ENCODE measurements at regions of chr7 and their contacts with region 1.

Region 1: GRCh38 chr7:112449902-112450806 is at the start of gene IFRD1:
- DNase-seq: peak; percentile 99 to 100 (median 99)
- ATAC-seq: peak; percentile 89
- H3K4me3 ChIP-seq: peak within 1 kb of the TSS; percentile 88
- H3K27ac ChIP-seq: peak within 1 kb of the TSS; percentile 87
- H3K4me1 ChIP-seq: peaks cover 8 to 12% of the 10 kb centered on the region in 2 experiments; a peak in 4 of 5 replicates
- H3K27me3 ChIP-seq: no peaks in the 10 kb centered on the region
- CTCF ChIP-seq: 0 out of 6 replicates have a peak, but pooled peaks of 1 of the 3 experiments have one; percentile 6
- EP300 ChIP-seq: no peak; the same call in none of the 2 replicates
- POLR2A ChIP-seq: peak; percentile 100
- RAD21 ChIP-seq: peak in 1 of 2 experiments; percentile 13; a peak in 2 of 4 replicates
- polyA plus RNA-seq, gene IFRD1: 27.6 to 37.0 TPM

Region 2: GRCh38 chr7:112238852-112239610 is 211.1 kb before region 1 on chr7:
- CTCF ChIA-PET with region 1: no interaction called
- POLR2A ChIA-PET with region 1: no interaction called
- in situ Hi-C with region 1: no loop called
- intact Hi-C with region 1: no loop called
- DNase-seq: no peak
- ATAC-seq: no peak
- H3K4me3 ChIP-seq: no peak overlapping the region
- H3K27ac ChIP-seq: no peak overlapping the region
- H3K4me1 ChIP-seq: no peaks in the 10 kb centered on the region
- H3K27me3 ChIP-seq: no peaks in the 10 kb centered on the region
- CTCF ChIP-seq: no peak
- EP300 ChIP-seq: no peak
- POLR2A ChIP-seq: no peak
- RAD21 ChIP-seq: no peak

Region 3: GRCh38 chr7:112422842-112423496 is 27.2 kb before region 1 on chr7:
- CTCF ChIA-PET with region 1: no interaction called
- POLR2A ChIA-PET with region 1: interaction called, 21 read pairs
- in situ Hi-C with region 1: no loop called
- intact Hi-C with region 1: no loop called
- DNase-seq: peak; percentile 85 to 91 (median 89)
- ATAC-seq: peak; percentile 96
- H3K4me3 ChIP-seq: no peak overlapping the region
- H3K27ac ChIP-seq: peak overlapping the region; percentile 42
- H3K4me1 ChIP-seq: peaks cover 0 to 20% of the 10 kb centered on the region in 2 experiments; a peak in 4 of 5 replicates
- H3K27me3 ChIP-seq: no peaks in the 10 kb centered on the region
- CTCF ChIP-seq: no peak; a peak in 1 of 6 replicates
- EP300 ChIP-seq: peak; percentile 34
- POLR2A ChIP-seq: no peak
- RAD21 ChIP-seq: peak in 1 of 2 experiments; percentile 14; a peak in 1 of 4 replicates

Region 4: GRCh38 chr7:112437043-112437442 is 13.1 kb before region 1 on chr7:
- CTCF ChIA-PET with region 1: no interaction called
- POLR2A ChIA-PET with region 1: interaction called, 33 read pairs
- in situ Hi-C with region 1: no loop called
- intact Hi-C with region 1: no loop called
- DNase-seq: no peak
- ATAC-seq: no peak
- H3K4me3 ChIP-seq: no peak overlapping the region
- H3K27ac ChIP-seq: no peak overlapping the region
- H3K4me1 ChIP-seq: peaks cover 0 to 3% of the 10 kb centered on the region in 2 experiments; a peak in 1 of 5 replicates
- H3K27me3 ChIP-seq: peaks cover 26 to 32% of the 10 kb centered on the region in 2 experiments; a peak in 4 of 5 replicates
- CTCF ChIP-seq: no peak
- EP300 ChIP-seq: no peak
- POLR2A ChIP-seq: no peak
- RAD21 ChIP-seq: no peak

Region 5: DNA sequence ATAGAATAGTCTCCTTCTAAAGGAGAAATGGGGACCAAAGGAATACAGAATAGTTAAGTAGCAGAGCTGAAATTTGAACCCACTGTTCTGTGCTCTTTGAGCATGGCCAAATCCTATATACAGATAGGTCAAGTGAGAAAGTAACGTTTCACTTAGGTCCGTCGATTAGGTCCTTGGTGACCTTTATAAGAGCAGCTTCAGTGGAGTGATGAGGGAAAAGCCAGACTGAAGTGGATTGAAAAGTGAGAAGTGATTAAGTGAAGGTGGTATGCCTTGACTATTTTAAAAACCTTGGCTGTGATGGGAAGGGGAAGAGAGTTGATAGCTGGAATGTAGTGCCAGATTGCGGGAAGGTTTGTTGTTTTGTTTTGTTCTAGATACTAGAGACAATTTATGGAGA is 20.0 kb after region 1 on chr7:
- CTCF ChIA-PET with region 1: no interaction called
- POLR2A ChIA-PET with region 1: interaction called, 113 read pairs
- in situ Hi-C with region 1: no loop called
- intact Hi-C with region 1: no loop called
- DNase-seq: no peak
- ATAC-seq: no peak
- H3K4me3 ChIP-seq: no peak overlapping the region
- H3K27ac ChIP-seq: no peak overlapping the region
- H3K4me1 ChIP-seq: no peaks in the 10 kb centered on the region
- H3K27me3 ChIP-seq: no peaks in the 10 kb centered on the region
- CTCF ChIP-seq: no peak
- EP300 ChIP-seq: no peak
- POLR2A ChIP-seq: no peak
- RAD21 ChIP-seq: no peak

Region 6: DNA sequence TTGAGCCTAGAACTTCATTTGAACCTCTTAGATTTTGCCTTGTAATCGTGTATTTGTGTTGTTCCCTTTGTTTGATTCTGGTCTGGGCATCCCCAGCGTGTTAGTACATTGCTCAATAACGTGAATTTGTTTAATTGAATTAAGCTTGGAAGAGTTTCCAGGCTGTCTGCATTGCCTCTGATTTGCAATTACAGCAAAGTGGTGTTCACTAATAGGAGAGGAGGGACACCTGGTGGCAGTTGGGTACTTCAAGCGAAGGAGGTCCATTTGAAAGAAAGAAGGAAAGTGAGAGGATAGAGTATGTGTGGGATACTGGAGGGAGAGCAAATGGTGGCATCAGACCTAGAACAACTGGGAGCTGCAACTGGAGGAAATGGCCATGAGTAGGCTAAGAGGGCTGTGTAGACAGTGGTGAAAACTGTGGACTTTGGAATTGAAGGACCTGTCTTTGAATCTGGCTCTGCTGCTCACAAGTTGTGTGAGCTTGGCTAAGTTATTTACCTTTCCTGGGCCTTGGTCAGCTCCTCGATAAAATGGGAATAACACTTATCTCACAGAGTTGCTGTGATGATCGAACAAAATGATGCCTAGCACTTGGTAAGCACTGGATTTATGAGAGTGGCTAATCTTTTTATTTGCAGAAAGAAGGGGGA is 45.8 kb after region 1 on chr7:
- CTCF ChIA-PET with region 1: no interaction called
- POLR2A ChIA-PET with region 1: interaction called, 11 read pairs
- in situ Hi-C with region 1: no loop called
- intact Hi-C with region 1: no loop called
- DNase-seq: peak in 3 of 4 experiments; percentile 42 to 73 (median 53)
- ATAC-seq: peak; percentile 86
- H3K4me3 ChIP-seq: no peak overlapping the region
- H3K27ac ChIP-seq: no peak overlapping the region
- H3K4me1 ChIP-seq: no peaks in the 10 kb centered on the region
- H3K27me3 ChIP-seq: peaks cover 11 to 13% of the 10 kb centered on the region in 2 experiments
- CTCF ChIP-seq: peak; percentile 75 to 86 (median 75)
- EP300 ChIP-seq: no peak
- POLR2A ChIP-seq: no peak
- RAD21 ChIP-seq: peak; percentile 94 to 95

Measured in K562 (cell line).